CD8-positive, alpha-beta T cell (primary cell): ENCODE measurements at regions of chr3 and their contacts with region 1.

Region 1: DNA sequence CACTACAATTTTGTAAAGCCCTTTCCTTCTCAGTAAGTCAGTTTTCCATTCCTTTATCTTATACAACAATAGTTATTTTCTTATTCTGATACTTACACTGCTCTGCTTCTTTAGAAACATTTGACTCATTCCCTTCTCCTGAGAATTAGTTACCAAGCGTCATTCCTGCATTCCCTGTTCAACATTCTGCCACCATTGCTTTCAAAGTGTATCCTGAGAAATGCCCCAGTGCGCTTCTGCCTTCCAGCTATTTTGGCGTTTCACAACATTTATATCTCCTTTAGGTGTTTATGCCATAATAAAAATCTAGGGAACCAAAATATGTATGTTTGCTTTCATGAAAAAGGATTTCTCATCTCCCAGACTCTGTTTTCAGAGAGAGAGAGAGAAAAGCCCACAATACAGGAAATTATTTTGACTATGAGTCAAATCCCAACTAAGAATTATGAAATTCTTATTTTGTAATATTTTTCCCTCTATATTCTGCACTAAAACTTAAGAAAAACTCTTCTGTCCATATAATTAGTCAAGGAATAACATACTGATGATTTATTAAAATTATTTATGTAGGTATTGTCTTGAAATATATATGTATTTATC is 118.2 kb upstream of the RAP2B start:
- DNase-seq: no peak
- ATAC-seq: no peak
- H3K4me3 ChIP-seq: no peak overlapping the region
- H3K4me3 Mint-ChIP-seq: no peak overlapping the region
- H3K27ac ChIP-seq: no peak overlapping the region
- H3K27ac Mint-ChIP-seq: no peak overlapping the region
- H3K4me1 ChIP-seq: no peaks in the 10 kb centered on the region
- H3K4me1 Mint-ChIP-seq: peaks cover 2% of the 10 kb centered on the region
- H3K27me3 ChIP-seq: no peaks in the 10 kb centered on the region
- H3K27me3 Mint-ChIP-seq: peaks cover 5% of the 10 kb centered on the region
- CTCF ChIP-seq: no peak

Region 2: GRCh38 chr3:153138276-153139210 is 94.7 kb after region 1 on chr3:
- CTCF ChIA-PET with region 1: no interaction called
- POLR2A ChIA-PET with region 1: no interaction called
- intact Hi-C with region 1: no loop called
- DNase-seq: peak in 1 of 9 experiments; percentile 35
- ATAC-seq: no peak
- H3K4me3 ChIP-seq: no peak overlapping the region
- H3K4me3 Mint-ChIP-seq: no peak overlapping the region
- H3K27ac ChIP-seq: no peak overlapping the region
- H3K27ac Mint-ChIP-seq: no peak overlapping the region
- H3K4me1 ChIP-seq: no peaks in the 10 kb centered on the region
- H3K4me1 Mint-ChIP-seq: peaks cover 1% of the 10 kb centered on the region
- H3K27me3 ChIP-seq: no peaks in the 10 kb centered on the region
- H3K27me3 Mint-ChIP-seq: peaks cover 4% of the 10 kb centered on the region
- CTCF ChIP-seq: no peak

Region 3: DNA sequence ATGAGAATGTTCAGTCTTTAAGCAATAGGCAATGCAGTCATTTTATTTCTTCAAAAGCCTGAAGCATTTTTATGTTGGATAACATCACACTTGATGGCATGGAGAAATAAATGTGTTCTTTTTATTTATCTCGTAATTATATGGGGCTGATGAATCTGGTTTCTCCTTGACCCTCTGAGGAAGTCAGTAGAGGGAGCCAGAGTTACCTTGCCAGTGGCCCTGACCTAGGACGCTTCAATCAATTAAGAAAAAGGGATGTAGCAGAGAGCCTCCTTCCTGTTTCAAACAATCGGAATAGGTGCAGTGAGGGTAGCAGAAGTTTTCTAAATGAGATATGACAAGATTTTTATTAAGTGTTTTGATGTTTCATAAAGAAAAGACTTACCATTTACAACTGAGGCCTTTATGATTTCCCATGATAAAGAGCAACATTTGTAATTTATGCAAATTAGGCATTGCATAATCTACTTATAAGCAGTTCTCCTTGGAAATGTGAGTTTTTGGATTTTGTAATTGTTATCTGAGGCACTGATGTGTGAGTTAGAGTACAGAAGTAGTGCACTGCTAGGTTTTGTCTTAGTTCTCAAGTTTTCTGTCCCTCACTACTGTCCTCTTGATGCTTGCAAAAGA is 247.3 kb after region 1 on chr3:
- CTCF ChIA-PET with region 1: interaction called, 17 read pairs
- POLR2A ChIA-PET with region 1: interaction called, 3 read pairs
- intact Hi-C with region 1: loop called (anchors 1 kb)
- DNase-seq: peak in 2 of 9 experiments; percentile 44 to 57
- ATAC-seq: no peak
- H3K4me3 ChIP-seq: no peak overlapping the region
- H3K4me3 Mint-ChIP-seq: no peak overlapping the region
- H3K27ac ChIP-seq: no peak overlapping the region
- H3K27ac Mint-ChIP-seq: no peak overlapping the region
- H3K4me1 ChIP-seq: peaks cover 11% of the 10 kb centered on the region
- H3K4me1 Mint-ChIP-seq: peaks cover 38% of the 10 kb centered on the region
- H3K27me3 ChIP-seq: no peaks in the 10 kb centered on the region
- H3K27me3 Mint-ChIP-seq: no peaks in the 10 kb centered on the region
- CTCF ChIP-seq: no peak

Region 4: DNA sequence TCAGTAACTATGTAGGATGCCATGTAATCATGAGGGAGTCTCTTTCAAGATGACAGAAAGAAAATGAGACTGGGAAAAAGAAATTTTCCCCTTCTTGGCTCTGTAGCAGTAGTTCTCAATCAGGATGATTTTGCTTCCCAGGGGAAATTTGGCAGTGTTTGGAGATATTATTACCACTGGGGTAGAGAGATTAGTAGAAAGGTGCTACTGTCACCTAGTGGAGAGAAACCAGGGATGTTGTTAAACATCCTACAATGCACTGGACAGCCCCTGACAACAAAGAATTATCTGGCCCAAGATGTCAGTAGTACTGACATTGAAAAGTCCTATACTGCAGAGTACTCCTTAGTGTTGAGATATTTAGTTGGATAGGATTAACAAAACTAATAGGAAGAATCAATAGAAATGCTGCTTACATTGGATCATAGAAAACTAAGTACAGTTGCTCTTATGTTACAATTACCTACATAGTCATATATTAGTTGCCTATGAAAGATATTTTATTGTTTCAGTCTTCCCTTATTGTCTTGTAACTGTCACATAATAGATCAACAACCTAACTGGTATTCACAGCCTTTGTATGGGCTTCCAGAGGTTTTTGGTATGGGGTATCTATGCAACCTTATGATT is 551.5 kb after region 1 on chr3:
- CTCF ChIA-PET with region 1: interaction called, 12 read pairs
- POLR2A ChIA-PET with region 1: no interaction called
- intact Hi-C with region 1: loop called (anchors 1 to 2 kb)
- DNase-seq: peak in 2 of 9 experiments; percentile 38 to 49
- ATAC-seq: no peak
- H3K4me3 ChIP-seq: no peak overlapping the region
- H3K4me3 Mint-ChIP-seq: no peak overlapping the region
- H3K27ac ChIP-seq: no peak overlapping the region
- H3K27ac Mint-ChIP-seq: no peak overlapping the region
- H3K4me1 ChIP-seq: no peaks in the 10 kb centered on the region
- H3K4me1 Mint-ChIP-seq: peaks cover 6% of the 10 kb centered on the region
- H3K27me3 ChIP-seq: no peaks in the 10 kb centered on the region
- H3K27me3 Mint-ChIP-seq: no peaks in the 10 kb centered on the region
- CTCF ChIP-seq: peak; percentile 48

Region 5: DNA sequence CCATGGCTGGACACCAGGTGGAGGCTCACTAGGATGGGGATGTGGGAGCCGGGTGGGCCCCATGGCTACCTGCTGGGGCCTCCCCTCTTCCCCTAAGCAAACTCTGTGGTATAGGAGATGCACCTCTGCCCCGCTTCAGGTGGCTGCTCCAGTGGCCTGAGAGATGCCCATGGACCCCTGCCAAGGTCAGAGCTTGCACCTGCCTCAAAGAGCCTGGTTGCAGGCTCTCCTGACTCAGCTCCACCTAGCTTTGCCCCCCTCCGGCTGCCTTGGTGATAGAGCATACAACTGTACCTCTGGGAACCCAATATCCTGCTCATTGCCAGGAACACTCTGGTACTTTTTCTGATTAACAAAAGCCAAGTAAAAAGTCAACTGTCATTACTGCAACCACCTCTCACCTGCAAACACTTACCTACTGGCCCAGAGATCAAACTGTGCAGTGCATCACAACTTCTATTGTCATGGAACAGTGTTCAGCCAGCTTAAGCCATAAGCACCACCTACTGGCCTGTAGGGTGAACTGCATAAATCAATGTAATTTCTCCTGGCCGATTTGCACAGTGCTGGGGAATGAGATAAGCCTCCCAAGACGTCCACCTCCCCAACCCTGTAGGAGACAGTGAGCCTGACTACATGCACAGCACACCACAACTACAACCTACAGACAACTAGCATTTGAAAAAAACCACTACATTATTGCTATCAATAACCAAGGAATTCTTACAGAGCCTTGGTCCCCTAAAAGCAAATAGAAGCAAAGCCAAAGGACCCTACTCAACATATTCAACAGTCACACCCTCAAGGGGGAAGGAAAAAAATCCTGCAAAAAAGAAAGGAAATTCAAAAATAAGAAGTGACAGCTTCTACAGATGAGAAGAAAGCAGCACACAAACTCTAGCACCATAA is 725.0 kb after region 1 on chr3:
- CTCF ChIA-PET with region 1: interaction called, 13 read pairs
- POLR2A ChIA-PET with region 1: no interaction called
- intact Hi-C with region 1: loop called (anchors 1 kb)
- DNase-seq: peak in 8 of 9 experiments; percentile 24 to 75 (median 46)
- ATAC-seq: peak; percentile 98
- H3K4me3 ChIP-seq: no peak overlapping the region
- H3K4me3 Mint-ChIP-seq: no peak overlapping the region
- H3K27ac ChIP-seq: no peak overlapping the region
- H3K27ac Mint-ChIP-seq: no peak overlapping the region
- H3K4me1 ChIP-seq: no peaks in the 10 kb centered on the region
- H3K4me1 Mint-ChIP-seq: no peaks in the 10 kb centered on the region
- H3K27me3 ChIP-seq: no peaks in the 10 kb centered on the region
- H3K27me3 Mint-ChIP-seq: peaks cover 16% of the 10 kb centered on the region
- CTCF ChIP-seq: peak; percentile 81

Region 6: GRCh38 chr3:154018100-154018696 is 974.4 kb after region 1 on chr3:
- CTCF ChIA-PET with region 1: interaction called, 3 read pairs
- POLR2A ChIA-PET with region 1: no interaction called
- intact Hi-C with region 1: loop called (anchors 5 kb)
- DNase-seq: peak in 7 of 9 experiments; percentile 1 to 38 (median 26)
- ATAC-seq: no peak
- H3K4me3 ChIP-seq: no peak overlapping the region
- H3K4me3 Mint-ChIP-seq: no peak overlapping the region
- H3K27ac ChIP-seq: no peak overlapping the region
- H3K27ac Mint-ChIP-seq: no peak overlapping the region
- H3K4me1 ChIP-seq: no peaks in the 10 kb centered on the region
- H3K4me1 Mint-ChIP-seq: no peaks in the 10 kb centered on the region
- H3K27me3 ChIP-seq: no peaks in the 10 kb centered on the region
- H3K27me3 Mint-ChIP-seq: peaks cover 5% of the 10 kb centered on the region
- CTCF ChIP-seq: no peak